Naive thymus-derived CD8-positive, alpha-beta T cell (primary cell): ENCODE measurements at regions of chr7 and their contacts with region 1.

Region 1: DNA sequence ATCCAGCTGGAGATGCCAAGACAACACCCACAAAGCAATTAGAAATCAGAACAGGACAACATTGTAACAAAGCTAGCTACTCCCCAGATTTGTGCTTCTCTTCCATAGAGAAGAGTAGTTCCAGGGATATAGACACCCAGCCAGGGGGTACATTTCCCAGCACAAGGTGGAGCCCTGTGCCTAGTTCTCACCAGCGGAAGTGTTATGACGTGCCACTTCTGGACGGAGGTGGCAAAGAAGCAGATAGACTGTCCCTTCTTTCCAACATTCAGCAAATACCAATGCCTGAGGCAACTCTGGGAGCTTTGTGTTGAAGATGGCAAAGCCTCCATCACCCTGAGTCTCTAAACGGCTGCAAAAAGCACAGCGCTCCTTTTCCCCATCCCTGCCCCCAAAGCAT is 23.4 kb upstream of the GSAP start:
- DNase-seq: no peak
- ATAC-seq: no peak
- H3K4me3 Mint-ChIP-seq: no peak overlapping the region
- H3K27ac Mint-ChIP-seq: no peak overlapping the region
- H3K4me1 Mint-ChIP-seq: peaks cover 0 to 2% (median 0%) of the 10 kb centered on the region in 4 donors
- H3K27me3 Mint-ChIP-seq: peaks cover 0 to 4% (median 0%) of the 10 kb centered on the region in 5 donors

Region 2: DNA sequence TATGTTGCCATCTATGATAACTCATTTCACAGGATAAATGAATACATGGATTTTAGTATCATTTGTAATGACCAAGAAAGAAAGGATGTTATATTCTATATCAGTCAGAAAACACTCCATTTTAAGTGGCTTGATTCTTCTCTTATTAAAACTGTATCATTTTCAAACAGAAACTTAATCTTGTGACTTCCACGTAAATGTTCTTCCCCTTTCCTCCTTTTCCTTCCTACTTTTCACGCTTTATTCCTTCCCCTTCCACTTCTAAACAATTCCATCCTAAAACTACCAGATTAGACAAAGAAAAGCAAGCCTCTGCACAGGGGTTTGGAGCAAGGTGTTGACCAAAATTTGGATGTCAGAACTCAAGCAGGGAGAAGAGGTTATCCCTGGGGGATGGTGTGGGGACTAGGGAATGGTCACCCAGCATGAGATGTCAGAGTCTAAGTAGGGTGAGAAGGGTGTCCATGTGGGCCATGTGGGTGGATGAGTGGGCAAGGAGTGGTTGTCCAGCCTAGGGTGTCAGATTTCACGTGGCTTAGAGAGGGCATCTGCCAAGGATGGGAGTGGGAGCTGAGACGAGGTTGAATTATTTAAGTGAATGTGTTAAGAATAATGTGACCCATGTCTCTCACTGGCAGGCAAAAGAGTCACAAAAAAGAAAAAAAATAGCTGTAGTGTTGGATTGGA is 18.4 kb before region 1 on chr7:
- POLR2A ChIA-PET with region 1: no interaction called
- DNase-seq: no peak
- ATAC-seq: no peak
- H3K4me3 Mint-ChIP-seq: no peak overlapping the region
- H3K27ac Mint-ChIP-seq: no peak overlapping the region
- H3K4me1 Mint-ChIP-seq: peaks cover 0 to 25% (median 14%) of the 10 kb centered on the region in 4 donors
- H3K27me3 Mint-ChIP-seq: peaks cover 0 to 8% (median 1%) of the 10 kb centered on the region in 5 donors

Region 3: DNA sequence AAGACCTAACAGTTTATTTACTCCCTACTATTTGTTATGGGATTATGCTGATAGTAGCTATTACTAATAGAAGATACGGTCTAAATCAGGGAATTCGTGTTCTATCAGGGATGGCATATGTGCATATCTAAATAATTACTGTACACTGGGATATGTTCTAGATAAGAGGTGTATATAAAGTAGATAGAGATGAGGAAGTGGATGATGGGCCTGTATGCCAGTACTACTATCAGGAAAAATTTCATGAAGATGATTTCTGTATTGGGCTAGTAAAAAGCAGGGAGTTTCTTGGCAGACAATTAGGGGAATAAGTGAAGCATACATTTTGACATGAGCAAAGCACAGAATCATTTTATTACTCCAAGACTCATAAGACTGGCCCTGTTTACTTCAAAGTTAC is 123.7 kb after region 1 on chr7:
- POLR2A ChIA-PET with region 1: interaction called, 10 read pairs
- DNase-seq: no peak
- ATAC-seq: no peak
- H3K4me3 Mint-ChIP-seq: no peak overlapping the region
- H3K27ac Mint-ChIP-seq: no peak overlapping the region
- H3K4me1 Mint-ChIP-seq: peaks cover 5 to 56% (median 11%) of the 10 kb centered on the region in 4 donors
- H3K27me3 Mint-ChIP-seq: no peaks in the 10 kb centered on the region

Region 4: DNA sequence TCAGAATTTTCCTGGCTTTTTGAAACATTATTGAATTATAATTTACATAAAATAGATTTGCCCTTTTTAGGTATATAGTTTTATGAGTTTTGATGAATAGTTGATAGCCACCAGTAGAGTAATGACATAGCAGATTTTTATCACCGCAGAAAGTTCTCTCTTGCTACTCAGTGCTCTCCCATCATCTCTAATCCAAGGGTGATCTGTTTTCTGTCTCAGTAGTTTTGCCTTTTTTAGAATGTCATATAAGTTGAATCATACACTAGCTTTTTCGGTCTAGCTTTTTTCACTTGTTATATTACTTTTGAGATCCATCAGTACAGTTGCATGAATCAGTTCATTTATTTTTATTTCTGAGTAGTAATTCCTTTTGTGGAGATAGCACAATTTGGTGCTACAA is 274.6 kb after region 1 on chr7:
- POLR2A ChIA-PET with region 1: no interaction called
- DNase-seq: no peak
- ATAC-seq: no peak
- H3K4me3 Mint-ChIP-seq: peak overlapping the region in 2 of 10 donors; percentile 27 to 66
- H3K27ac Mint-ChIP-seq: peak overlapping the region in 5 of 10 donors; percentile 33 to 80 (median 45)
- H3K4me1 Mint-ChIP-seq: peaks cover 23 to 89% (median 68%) of the 10 kb centered on the region in 4 donors
- H3K27me3 Mint-ChIP-seq: no peaks in the 10 kb centered on the region